ENCODE measurements at regions of chr22 and their contacts with region 1.

Region 1: DNA sequence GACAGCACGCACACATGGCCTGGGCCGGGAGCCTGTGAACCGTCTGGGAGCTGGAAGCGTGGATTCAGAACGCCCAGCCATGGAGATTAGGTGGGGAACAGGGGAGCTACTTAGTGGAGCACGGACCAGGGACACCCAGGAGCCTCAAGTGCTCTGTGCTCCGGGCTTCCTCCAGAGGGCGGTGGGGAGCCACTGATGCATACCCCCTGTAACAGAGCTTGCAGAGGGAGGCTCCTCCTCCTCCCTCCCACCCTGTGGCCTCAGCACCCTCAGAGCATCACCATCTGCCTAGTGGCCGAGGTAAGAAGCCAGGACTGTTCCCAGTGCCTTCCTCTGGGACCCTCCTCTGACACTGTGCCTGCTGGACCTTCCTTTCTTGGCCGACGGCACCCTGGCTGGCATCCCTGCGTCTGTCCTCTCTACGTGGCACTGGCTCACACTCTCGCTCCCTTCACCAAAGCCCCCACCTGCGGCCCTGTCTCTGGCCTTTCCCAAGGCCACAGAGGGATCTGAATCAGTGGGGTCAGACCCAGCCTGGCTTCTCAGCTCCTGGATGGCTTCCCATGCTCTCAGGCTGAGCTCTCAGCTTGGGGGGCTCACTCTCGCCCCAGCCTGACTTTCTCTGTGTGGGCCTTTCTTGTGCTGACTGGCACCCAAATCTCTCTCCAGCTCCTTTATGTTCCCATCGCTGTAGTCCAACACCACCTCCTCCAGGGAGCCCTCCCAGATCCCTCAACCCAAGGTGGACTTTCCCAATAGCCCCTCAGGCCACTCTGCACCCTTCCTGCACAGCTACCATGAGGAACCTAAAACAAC is 780.9 kb downstream of the BRD1 start:
- DNase-seq: peak; percentile 30
- H3K4me3 ChIP-seq: no peak overlapping the region
- H3K27ac ChIP-seq: no peak overlapping the region
- H3K4me1 ChIP-seq: no peaks in the 10 kb centered on the region
- H3K27me3 ChIP-seq: no peaks in the 10 kb centered on the region
- CTCF ChIP-seq: no peak

Region 2: GRCh38 chr22:48432781-48433518 is 613.8 kb before region 1 on chr22:
- intact Hi-C with region 1: no loop called
- DNase-seq: no peak
- H3K4me3 ChIP-seq: no peak overlapping the region
- H3K27ac ChIP-seq: no peak overlapping the region
- H3K4me1 ChIP-seq: no peaks in the 10 kb centered on the region
- H3K27me3 ChIP-seq: no peaks in the 10 kb centered on the region
- CTCF ChIP-seq: no peak

Region 3: GRCh38 chr22:49112661-49113626 is 66.2 kb after region 1 on chr22:
- intact Hi-C with region 1: no loop called
- DNase-seq: no peak
- H3K4me3 ChIP-seq: no peak overlapping the region
- H3K27ac ChIP-seq: no peak overlapping the region
- H3K4me1 ChIP-seq: no peaks in the 10 kb centered on the region
- H3K27me3 ChIP-seq: no peaks in the 10 kb centered on the region
- CTCF ChIP-seq: no peak

Region 4: GRCh38 chr22:49305214-49305909 is 258.6 kb after region 1 on chr22:
- intact Hi-C with region 1: loop called (anchors 5 kb)
- DNase-seq: peak; percentile 60
- H3K4me3 ChIP-seq: no peak overlapping the region
- H3K27ac ChIP-seq: no peak overlapping the region
- H3K4me1 ChIP-seq: no peaks in the 10 kb centered on the region
- H3K27me3 ChIP-seq: no peaks in the 10 kb centered on the region
- CTCF ChIP-seq: peak; percentile 88